ENCODE measurements at regions of chr1 and their contacts with region 1.

Region 1: DNA sequence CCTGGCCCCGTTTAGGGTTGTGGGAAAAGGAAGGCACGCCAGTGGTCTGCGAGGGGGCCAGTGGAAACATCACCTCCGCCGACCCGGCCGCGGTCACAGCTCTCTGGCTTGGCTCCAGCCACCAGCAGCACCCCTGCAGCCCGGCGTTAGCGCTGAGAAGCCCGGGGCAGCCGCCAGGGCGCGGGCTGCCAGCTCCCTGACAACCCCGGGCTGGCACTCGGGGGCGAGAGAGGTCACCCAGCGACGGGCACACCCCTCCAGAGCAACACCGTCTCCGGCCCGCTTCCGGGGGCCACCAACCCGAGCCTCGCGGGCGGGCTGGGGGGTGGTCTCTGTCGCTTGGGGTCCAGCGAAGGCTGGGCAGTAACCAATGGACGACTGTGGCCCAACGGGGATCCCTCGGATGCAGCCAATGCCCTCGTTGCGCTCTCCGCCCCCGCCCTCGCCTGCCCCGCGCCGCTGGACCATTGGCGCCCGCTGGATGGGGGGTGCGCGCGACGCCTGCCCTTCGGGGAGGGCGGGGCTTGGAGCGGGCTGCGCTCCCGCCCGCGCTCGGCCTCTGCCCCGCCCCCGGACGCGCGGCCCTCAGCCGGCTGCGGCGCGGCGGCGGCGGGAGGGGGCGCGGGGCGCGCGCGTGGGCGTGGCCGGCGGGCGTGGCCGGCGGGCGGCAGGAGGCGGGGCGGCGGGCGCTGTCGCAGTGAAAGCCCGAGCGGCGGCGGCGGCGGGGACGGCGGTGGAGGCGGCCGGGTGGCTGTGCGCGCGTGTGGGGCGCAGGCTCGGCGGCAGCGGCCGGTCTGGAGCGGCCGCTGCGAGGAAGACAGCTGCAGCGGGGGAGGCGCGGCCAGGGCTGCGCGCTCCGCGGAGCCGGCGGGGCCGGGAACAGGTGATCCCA is at the start of gene MAN1C1:
- DNase-seq: peak; percentile 70 to 93 (median 81)
- ATAC-seq: peak; percentile 76
- H3K4me3 ChIP-seq: peak within 1 kb of the TSS; percentile 64 to 74
- H3K4me3 Mint-ChIP-seq: peak within 1 kb of the TSS; percentile 83
- H3K27ac ChIP-seq: peak within 1 kb of the TSS; percentile 58 to 74
- H3K27ac Mint-ChIP-seq: peak within 1 kb of the TSS; percentile 49
- H3K4me1 ChIP-seq: peaks cover 48% of the 10 kb centered on the region
- H3K4me1 Mint-ChIP-seq: peaks cover 52% of the 10 kb centered on the region
- H3K27me3 ChIP-seq: no peaks in the 10 kb centered on the region
- H3K27me3 Mint-ChIP-seq: no peaks in the 10 kb centered on the region
- CTCF ChIP-seq: no peak
- total RNA-seq, gene MAN1C1: 24.6 to 25.7 TPM

Region 2: DNA sequence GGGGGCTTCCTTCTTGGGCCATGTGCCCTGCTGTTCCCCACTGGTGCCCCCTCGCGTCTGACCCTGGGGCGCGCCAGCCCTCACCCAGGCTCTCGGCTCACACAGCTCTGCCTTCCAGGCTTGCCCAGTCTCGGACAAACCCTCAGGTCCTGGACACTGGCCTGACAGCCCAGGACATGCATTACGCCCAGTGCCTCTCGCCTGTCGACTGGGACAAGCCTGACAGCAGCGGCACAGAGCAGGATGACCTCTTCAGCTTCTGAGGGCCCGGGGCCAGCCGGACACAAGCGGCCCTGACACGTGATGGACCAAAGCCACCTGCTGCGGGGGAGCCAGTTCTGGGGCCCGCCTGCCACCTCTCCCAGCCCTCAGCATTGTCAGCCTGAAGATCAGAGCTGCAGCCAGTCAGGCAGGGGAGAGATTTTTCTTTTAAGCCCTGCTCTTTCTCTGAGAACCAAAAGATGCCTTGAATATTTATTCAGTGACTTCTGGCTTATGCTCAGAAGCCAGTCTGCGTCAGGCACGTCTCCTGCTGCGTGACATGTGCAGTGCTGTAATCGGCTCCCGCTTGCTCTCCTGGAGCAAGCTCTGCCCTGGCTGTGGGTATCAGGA is 49.5 kb before region 1 on chr1:
- CTCF ChIA-PET with region 1: interaction called, 10 read pairs
- POLR2A ChIA-PET with region 1: interaction called, 5 read pairs
- intact Hi-C with region 1: loop called in 1 of 2 experiments (anchors 5 kb)
- DNase-seq: peak in 7 of 9 experiments; percentile 40 to 82 (median 74)
- ATAC-seq: peak; percentile 27
- H3K4me3 ChIP-seq: peak overlapping the region in 1 of 2 experiments; percentile 85
- H3K4me3 Mint-ChIP-seq: peak overlapping the region; percentile 95
- H3K27ac ChIP-seq: peak overlapping the region in 1 of 2 experiments; percentile 25
- H3K27ac Mint-ChIP-seq: peak overlapping the region; percentile 96
- H3K4me1 ChIP-seq: peaks cover 73% of the 10 kb centered on the region
- H3K4me1 Mint-ChIP-seq: peaks cover 86% of the 10 kb centered on the region
- H3K27me3 ChIP-seq: no peaks in the 10 kb centered on the region
- H3K27me3 Mint-ChIP-seq: no peaks in the 10 kb centered on the region
- CTCF ChIP-seq: peak; percentile 49

Region 3: GRCh38 chr1:25642574-25643108 is 26.3 kb after region 1 on chr1:
- CTCF ChIA-PET with region 1: interaction called, 41 read pairs
- POLR2A ChIA-PET with region 1: interaction called, 17 read pairs
- intact Hi-C with region 1: loop called in 1 of 2 experiments (anchors 1 kb)
- DNase-seq: peak; percentile 53 to 90 (median 74)
- ATAC-seq: peak; percentile 84
- H3K4me3 ChIP-seq: peak overlapping the region; percentile 7 to 14
- H3K4me3 Mint-ChIP-seq: peak overlapping the region; percentile 74
- H3K27ac ChIP-seq: peak overlapping the region; percentile 51 to 57
- H3K27ac Mint-ChIP-seq: peak overlapping the region; percentile 95
- H3K4me1 ChIP-seq: peaks cover 57% of the 10 kb centered on the region
- H3K4me1 Mint-ChIP-seq: peaks cover 77% of the 10 kb centered on the region
- H3K27me3 ChIP-seq: no peaks in the 10 kb centered on the region
- H3K27me3 Mint-ChIP-seq: no peaks in the 10 kb centered on the region
- CTCF ChIP-seq: no peak

Region 4: GRCh38 chr1:25695090-25695770 is 78.9 kb after region 1 on chr1:
- CTCF ChIA-PET with region 1: interaction called, 9 read pairs
- POLR2A ChIA-PET with region 1: interaction called, 6 read pairs
- intact Hi-C with region 1: loop called in 1 of 2 experiments (anchors 5 kb)
- DNase-seq: no peak
- ATAC-seq: no peak
- H3K4me3 ChIP-seq: no peak overlapping the region
- H3K4me3 Mint-ChIP-seq: no peak overlapping the region
- H3K27ac ChIP-seq: no peak overlapping the region
- H3K27ac Mint-ChIP-seq: peak overlapping the region; percentile 58
- H3K4me1 ChIP-seq: peaks cover 44% of the 10 kb centered on the region
- H3K4me1 Mint-ChIP-seq: peaks cover 59% of the 10 kb centered on the region
- H3K27me3 ChIP-seq: no peaks in the 10 kb centered on the region
- H3K27me3 Mint-ChIP-seq: no peaks in the 10 kb centered on the region
- CTCF ChIP-seq: no peak

Region 5: GRCh38 chr1:25810341-25811299 is 194.3 kb after region 1 on chr1:
- CTCF ChIA-PET with region 1: interaction called, 135 read pairs
- POLR2A ChIA-PET with region 1: no interaction called
- intact Hi-C with region 1: loop called in 1 of 2 experiments (anchors 1 kb)
- DNase-seq: peak; percentile 67 to 91 (median 82)
- ATAC-seq: peak; percentile 98
- H3K4me3 ChIP-seq: no peak overlapping the region
- H3K4me3 Mint-ChIP-seq: no peak overlapping the region
- H3K27ac ChIP-seq: no peak overlapping the region
- H3K27ac Mint-ChIP-seq: no peak overlapping the region
- H3K4me1 ChIP-seq: peaks cover 5% of the 10 kb centered on the region
- H3K4me1 Mint-ChIP-seq: peaks cover 5% of the 10 kb centered on the region
- H3K27me3 ChIP-seq: no peaks in the 10 kb centered on the region
- H3K27me3 Mint-ChIP-seq: no peaks in the 10 kb centered on the region
- CTCF ChIP-seq: peak; percentile 98

Measured in CD8-positive, alpha-beta T cell (primary cell).